Endothelial cell of umbilical vein (primary cell): ENCODE measurements at regions of chr9 and their contacts with region 1.

Region 1: DNA sequence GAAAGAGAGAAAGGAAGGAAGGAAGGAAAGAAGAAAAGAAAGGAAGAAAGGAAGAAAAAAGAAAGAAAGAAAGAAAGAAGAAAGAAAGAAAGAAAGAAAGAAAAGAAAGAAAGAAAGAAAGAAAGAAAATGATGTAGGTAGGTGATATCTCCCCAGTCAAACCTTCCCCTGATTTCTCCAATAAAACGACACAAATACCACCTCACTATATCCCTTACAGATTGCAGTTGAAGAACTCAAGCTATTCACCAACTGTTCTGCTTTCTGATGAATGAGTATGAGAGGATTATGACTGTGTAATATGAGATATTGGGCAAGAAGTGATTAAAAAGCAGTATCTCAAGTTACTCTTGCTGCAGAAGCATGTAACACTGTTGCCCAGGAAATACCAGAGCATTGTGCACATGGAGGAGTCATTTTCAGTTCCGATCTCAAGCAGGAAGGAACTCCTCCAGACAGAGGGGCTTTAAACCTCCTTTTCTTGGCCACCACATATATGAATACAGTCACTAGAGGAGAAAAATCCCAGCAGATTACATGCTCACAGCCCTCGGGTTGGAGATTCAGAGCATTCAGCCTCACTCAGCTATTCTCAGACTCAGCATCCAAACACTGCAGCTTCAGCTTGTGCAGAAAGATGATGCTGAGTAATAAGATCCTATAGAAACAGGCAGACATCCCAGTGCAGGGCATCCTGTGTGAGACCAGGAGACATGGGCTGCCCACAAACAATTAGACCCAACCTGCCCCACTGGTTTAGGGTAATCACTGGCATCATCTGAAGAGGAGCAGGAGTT is 61.4 kb downstream of the UGCG start:
- DNase-seq: peak; percentile 96
- H3K4me3 ChIP-seq: peak overlapping the region in 1 of 3 experiments; percentile 6
- H3K27ac ChIP-seq: peak overlapping the region; percentile 89
- H3K4me1 ChIP-seq: peaks cover 43% of the 10 kb centered on the region
- H3K27me3 ChIP-seq: no peaks in the 10 kb centered on the region
- CTCF ChIP-seq: no peak
- POLR2A ChIP-seq: peak; percentile 79

Region 2: DNA sequence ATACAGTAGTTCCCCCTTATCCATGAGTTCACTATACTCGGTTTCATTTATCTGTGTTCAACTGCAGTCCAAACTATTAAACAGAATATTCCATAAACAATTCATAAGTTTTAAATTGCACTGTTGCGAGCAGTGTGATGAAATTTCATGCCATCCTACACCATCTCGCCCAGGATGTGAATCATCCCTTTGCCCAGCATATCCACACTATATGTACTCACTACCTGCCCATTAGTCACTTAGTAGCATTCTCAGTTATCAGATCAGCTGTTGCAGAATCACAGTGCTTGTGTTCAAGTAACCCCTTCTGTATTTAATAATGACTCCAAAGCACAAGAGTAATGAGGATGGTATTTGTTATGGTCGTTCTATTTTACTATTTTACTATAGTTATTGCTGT is 214.8 kb before region 1 on chr9:
- CTCF ChIA-PET with region 1: no interaction called
- POLR2A ChIA-PET with region 1: no interaction called
- dilution Hi-C with region 1: no loop called
- intact Hi-C with region 1: no loop called
- DNase-seq: peak; percentile 21
- H3K4me3 ChIP-seq: no peak overlapping the region
- H3K27ac ChIP-seq: no peak overlapping the region
- H3K4me1 ChIP-seq: peaks cover 8% of the 10 kb centered on the region
- H3K27me3 ChIP-seq: no peaks in the 10 kb centered on the region
- CTCF ChIP-seq: no peak
- POLR2A ChIP-seq: no peak

Region 3: GRCh38 chr9:111902396-111903147 is 55.5 kb before region 1 on chr9:
- CTCF ChIA-PET with region 1: interaction called, 3 read pairs
- POLR2A ChIA-PET with region 1: no interaction called
- dilution Hi-C with region 1: no loop called
- intact Hi-C with region 1: loop called (anchors 1 kb)
- DNase-seq: peak; percentile 82
- H3K4me3 ChIP-seq: no peak overlapping the region
- H3K27ac ChIP-seq: peak overlapping the region; percentile 38
- H3K4me1 ChIP-seq: peaks cover 33% of the 10 kb centered on the region
- H3K27me3 ChIP-seq: no peaks in the 10 kb centered on the region
- CTCF ChIP-seq: no peak
- POLR2A ChIP-seq: no peak

Region 4: DNA sequence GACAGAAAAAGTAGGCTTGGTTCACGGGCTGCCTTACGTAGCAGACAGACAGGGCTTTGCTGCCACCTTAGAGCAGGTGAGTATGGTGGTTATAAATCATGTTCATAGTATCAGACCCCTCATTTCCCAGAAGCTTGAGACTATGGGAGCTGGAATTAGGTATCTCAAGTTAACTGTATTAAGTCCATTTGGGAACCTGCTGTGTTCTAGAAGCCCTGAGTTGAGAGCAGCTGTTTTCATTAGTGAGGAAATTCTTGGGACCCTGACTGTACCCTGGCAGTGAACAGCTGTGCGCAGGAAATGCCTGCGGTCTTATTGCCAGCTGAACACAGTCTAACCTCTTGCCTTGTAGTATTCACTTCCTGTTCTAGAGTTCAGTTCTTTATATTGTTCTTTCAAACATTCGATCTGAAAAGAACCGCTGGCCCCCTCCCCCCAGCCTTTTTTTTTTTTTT is 31.6 kb before region 1 on chr9:
- CTCF ChIA-PET with region 1: no interaction called
- POLR2A ChIA-PET with region 1: no interaction called
- dilution Hi-C with region 1: no loop called
- intact Hi-C with region 1: loop called (anchors 1 kb)
- DNase-seq: peak; percentile 95
- H3K4me3 ChIP-seq: no peak overlapping the region
- H3K27ac ChIP-seq: peak overlapping the region; percentile 99
- H3K4me1 ChIP-seq: peaks cover 39% of the 10 kb centered on the region
- H3K27me3 ChIP-seq: no peaks in the 10 kb centered on the region
- CTCF ChIP-seq: no peak
- POLR2A ChIP-seq: no peak

Region 5: GRCh38 chr9:112012026-112012902 is 54.2 kb after region 1 on chr9:
- CTCF ChIA-PET with region 1: interaction called, 8 read pairs
- POLR2A ChIA-PET with region 1: interaction called, 5 read pairs
- dilution Hi-C with region 1: no loop called
- intact Hi-C with region 1: loop called (anchors 1 kb)
- DNase-seq: peak; percentile 94
- H3K4me3 ChIP-seq: no peak overlapping the region
- H3K27ac ChIP-seq: peak overlapping the region; percentile 95
- H3K4me1 ChIP-seq: peaks cover 22% of the 10 kb centered on the region
- H3K27me3 ChIP-seq: no peaks in the 10 kb centered on the region
- CTCF ChIP-seq: no peak
- POLR2A ChIP-seq: peak; percentile 26

Region 6: GRCh38 chr9:112020680-112021596 is 62.9 kb after region 1 on chr9:
- CTCF ChIA-PET with region 1: interaction called, 10 read pairs
- POLR2A ChIA-PET with region 1: no interaction called
- dilution Hi-C with region 1: no loop called
- intact Hi-C with region 1: loop called (anchors 1 kb)
- DNase-seq: peak; percentile 74
- H3K4me3 ChIP-seq: no peak overlapping the region
- H3K27ac ChIP-seq: peak overlapping the region; percentile 64
- H3K4me1 ChIP-seq: peaks cover 24% of the 10 kb centered on the region
- H3K27me3 ChIP-seq: no peaks in the 10 kb centered on the region
- CTCF ChIP-seq: no peak
- POLR2A ChIP-seq: no peak

Region 7: DNA sequence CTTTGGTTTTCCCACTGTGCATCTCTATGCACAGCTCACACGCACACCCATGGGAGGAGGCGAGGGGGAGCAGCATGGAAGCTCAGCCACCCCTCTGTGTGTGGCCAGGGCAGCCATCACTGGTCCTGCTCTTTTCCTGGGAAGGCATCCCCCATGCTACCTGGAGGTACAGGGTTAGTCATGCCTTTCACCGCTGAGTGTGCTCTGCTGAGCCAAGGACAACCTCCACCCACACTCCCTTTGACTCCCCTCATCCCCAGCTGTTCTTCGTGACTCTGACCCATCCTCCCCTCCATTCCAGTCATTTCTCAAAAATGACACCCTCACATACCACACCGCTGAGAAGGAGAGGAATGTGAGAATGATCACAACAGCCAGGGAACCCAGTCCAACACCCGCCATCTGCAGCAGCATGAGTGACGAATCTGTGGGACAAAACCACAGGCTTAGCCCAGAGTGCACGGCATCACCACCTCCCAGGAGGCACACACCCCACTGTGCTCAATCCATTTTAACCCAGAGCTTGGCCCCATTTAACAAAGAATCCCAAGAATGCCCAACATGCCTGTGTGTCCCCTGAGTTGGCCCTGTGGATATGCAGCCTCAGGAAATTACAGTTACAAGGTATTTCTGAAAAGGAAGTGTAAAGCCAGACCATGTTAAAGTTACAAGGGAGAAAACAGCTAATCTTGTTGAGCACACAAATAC is 83.6 kb after region 1 on chr9:
- CTCF ChIA-PET with region 1: no interaction called
- POLR2A ChIA-PET with region 1: no interaction called
- dilution Hi-C with region 1: no loop called
- intact Hi-C with region 1: loop called (anchors 1 kb)
- DNase-seq: peak; percentile 83
- H3K4me3 ChIP-seq: no peak overlapping the region
- H3K27ac ChIP-seq: peak overlapping the region; percentile 83
- H3K4me1 ChIP-seq: peaks cover 30% of the 10 kb centered on the region
- H3K27me3 ChIP-seq: no peaks in the 10 kb centered on the region
- CTCF ChIP-seq: no peak
- POLR2A ChIP-seq: no peak

Region 8: DNA sequence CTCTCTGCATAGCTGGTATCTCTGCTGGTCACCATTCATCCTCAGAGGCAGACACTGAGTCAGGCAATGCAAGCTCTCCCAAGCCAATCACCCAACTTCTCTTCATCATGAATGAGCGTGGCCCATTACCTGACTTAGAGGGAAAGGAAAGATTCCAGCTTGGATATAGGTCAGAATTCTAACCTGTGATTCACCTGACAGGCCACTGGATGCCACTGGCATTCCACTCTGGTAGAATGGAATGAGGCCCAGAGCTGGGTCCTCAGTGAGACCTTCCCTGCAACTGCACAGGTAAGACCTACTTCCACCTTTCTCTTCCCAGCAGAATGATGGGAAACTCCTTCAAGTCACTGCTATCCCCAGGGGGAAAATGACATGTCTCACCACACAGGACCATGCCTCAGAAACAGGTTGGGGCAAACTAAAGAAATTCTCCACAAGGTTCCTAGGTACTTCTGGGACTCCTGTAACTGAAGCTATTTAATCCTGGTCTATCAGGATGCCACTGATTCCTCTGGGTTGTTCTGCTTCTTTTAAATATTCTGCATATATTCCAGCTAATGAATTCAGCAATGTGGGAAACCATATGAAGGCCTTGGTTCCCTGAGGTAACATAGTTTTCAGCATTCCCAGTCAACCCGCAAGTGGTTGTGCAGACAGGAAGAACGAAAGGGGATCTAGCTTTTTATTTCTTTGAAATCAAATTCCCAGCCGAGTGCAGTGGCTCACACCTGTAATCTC is 155.1 kb after region 1 on chr9:
- CTCF ChIA-PET with region 1: no interaction called
- POLR2A ChIA-PET with region 1: no interaction called
- dilution Hi-C with region 1: no loop called
- intact Hi-C with region 1: no loop called
- DNase-seq: no peak
- H3K4me3 ChIP-seq: no peak overlapping the region
- H3K27ac ChIP-seq: peak overlapping the region; percentile 48
- H3K4me1 ChIP-seq: peaks cover 13% of the 10 kb centered on the region
- H3K27me3 ChIP-seq: no peaks in the 10 kb centered on the region
- CTCF ChIP-seq: peak; percentile 27 to 28
- POLR2A ChIP-seq: no peak